ENCODE measurements at regions of chr15 and their contacts with region 1.

Region 1: DNA sequence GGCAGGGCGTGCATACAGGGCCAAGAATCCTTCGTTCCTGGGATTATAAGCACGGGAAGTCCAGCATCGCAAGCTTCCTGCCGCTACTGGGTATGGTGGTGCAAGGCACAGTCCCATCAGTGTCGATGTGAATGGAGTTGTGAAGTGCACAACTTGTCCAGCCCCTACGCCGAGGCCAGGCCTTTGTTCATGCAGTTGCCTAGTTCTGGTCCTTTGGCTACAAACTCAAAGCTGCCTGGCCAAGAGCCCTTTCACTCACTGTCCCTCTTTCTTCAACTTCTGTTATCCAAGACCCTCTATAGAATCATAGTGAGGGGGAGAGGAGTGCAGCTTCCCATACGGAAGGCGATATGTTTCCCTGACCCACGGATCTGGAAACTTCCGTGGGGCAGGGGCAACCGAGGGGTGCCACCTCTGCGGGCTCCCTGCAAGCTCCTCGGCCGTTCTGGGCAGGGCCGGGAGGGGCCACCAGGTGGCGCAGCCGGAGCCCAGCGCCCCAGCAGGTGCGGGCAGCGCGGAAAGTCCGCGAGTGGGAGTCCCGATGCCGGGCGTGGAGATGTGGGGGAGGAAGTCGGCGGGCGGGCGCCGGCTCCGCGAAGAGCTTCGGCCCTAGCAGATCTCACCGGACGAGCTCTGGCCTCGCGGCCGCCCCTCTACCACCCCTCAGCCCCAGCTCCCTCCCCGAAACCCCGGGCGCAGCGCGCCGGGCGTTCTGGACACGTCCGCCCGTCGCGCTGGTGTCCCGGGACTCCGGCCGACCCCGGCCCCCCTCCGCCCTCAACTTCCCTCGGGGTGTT is 693 bp downstream of the RASGRP1 start:
- DNase-seq: peak; percentile 89
- H3K4me3 Mint-ChIP-seq: peak overlapping the region; percentile 92
- H3K27ac Mint-ChIP-seq: peak overlapping the region; percentile 92
- H3K4me1 Mint-ChIP-seq: peaks cover 52% of the 10 kb centered on the region
- H3K27me3 Mint-ChIP-seq: no peaks in the 10 kb centered on the region

Region 2: GRCh38 chr15:38424101-38424552 is 139.8 kb before region 1 on chr15:
- CTCF ChIA-PET with region 1: no interaction called
- POLR2A ChIA-PET with region 1: no interaction called
- DNase-seq: no peak
- H3K4me3 Mint-ChIP-seq: no peak overlapping the region
- H3K27ac Mint-ChIP-seq: no peak overlapping the region
- H3K4me1 Mint-ChIP-seq: peaks cover 12% of the 10 kb centered on the region
- H3K27me3 Mint-ChIP-seq: peaks cover 38% of the 10 kb centered on the region

Region 3: GRCh38 chr15:38453971-38454695 is 109.8 kb before region 1 on chr15 and contains the start of gene FAM98B:
- CTCF ChIA-PET with region 1: interaction called, 10 read pairs
- POLR2A ChIA-PET with region 1: interaction called, 16 read pairs
- DNase-seq: peak; percentile 89
- H3K4me3 Mint-ChIP-seq: peak within 1 kb of the TSS; percentile 93
- H3K27ac Mint-ChIP-seq: peak within 1 kb of the TSS; percentile 84
- H3K4me1 Mint-ChIP-seq: peaks cover 35% of the 10 kb centered on the region
- H3K27me3 Mint-ChIP-seq: peaks cover 14% of the 10 kb centered on the region
- total RNA-seq, gene FAM98B: 33.2 to 35.3 TPM

Region 4: GRCh38 chr15:38470816-38471215 is 93.1 kb before region 1 on chr15:
- CTCF ChIA-PET with region 1: no interaction called
- POLR2A ChIA-PET with region 1: no interaction called
- DNase-seq: no peak
- H3K4me3 Mint-ChIP-seq: no peak overlapping the region
- H3K27ac Mint-ChIP-seq: no peak overlapping the region
- H3K4me1 Mint-ChIP-seq: peaks cover 4% of the 10 kb centered on the region
- H3K27me3 Mint-ChIP-seq: no peaks in the 10 kb centered on the region

Region 5: DNA sequence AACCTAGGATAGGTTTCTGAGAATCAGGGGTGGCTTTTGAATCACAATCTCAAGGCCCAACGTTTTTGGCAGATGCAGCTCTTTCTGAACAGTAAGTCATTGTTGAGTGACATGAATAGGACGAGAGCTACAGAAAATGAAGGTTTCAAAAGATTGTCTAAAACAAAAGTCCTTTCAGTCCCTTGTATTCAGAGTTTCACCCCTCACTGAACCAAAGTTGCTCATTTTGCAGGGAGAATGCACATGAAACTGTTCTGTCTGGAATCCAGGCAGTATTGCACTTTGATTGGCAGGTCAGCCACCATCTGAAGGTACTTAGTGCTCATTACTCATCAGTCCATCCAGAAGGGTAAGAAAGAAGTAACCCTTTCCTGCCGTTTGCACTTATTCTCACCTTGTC is 24.8 kb after region 1 on chr15:
- CTCF ChIA-PET with region 1: interaction called, 3 read pairs
- POLR2A ChIA-PET with region 1: interaction called, 13 read pairs
- DNase-seq: no peak
- H3K4me3 Mint-ChIP-seq: no peak overlapping the region
- H3K27ac Mint-ChIP-seq: no peak overlapping the region
- H3K4me1 Mint-ChIP-seq: peaks cover 32% of the 10 kb centered on the region
- H3K27me3 Mint-ChIP-seq: peaks cover 2% of the 10 kb centered on the region

Region 6: GRCh38 chr15:38624244-38625205 is 60.6 kb after region 1 on chr15:
- CTCF ChIA-PET with region 1: interaction called, 24 read pairs
- POLR2A ChIA-PET with region 1: interaction called, 22 read pairs
- DNase-seq: no peak
- H3K4me3 Mint-ChIP-seq: no peak overlapping the region
- H3K27ac Mint-ChIP-seq: no peak overlapping the region
- H3K4me1 Mint-ChIP-seq: peaks cover 25% of the 10 kb centered on the region
- H3K27me3 Mint-ChIP-seq: no peaks in the 10 kb centered on the region

Region 7: GRCh38 chr15:38647683-38648082 is 83.8 kb after region 1 on chr15:
- CTCF ChIA-PET with region 1: interaction called, 224 read pairs
- POLR2A ChIA-PET with region 1: interaction called, 495 read pairs
- DNase-seq: no peak
- H3K4me3 Mint-ChIP-seq: no peak overlapping the region
- H3K27ac Mint-ChIP-seq: no peak overlapping the region
- H3K4me1 Mint-ChIP-seq: peaks cover 63% of the 10 kb centered on the region
- H3K27me3 Mint-ChIP-seq: no peaks in the 10 kb centered on the region

Region 8: GRCh38 chr15:38671675-38672254 is 107.8 kb after region 1 on chr15:
- CTCF ChIA-PET with region 1: interaction called, 112 read pairs
- POLR2A ChIA-PET with region 1: interaction called, 327 read pairs
- DNase-seq: peak; percentile 52
- H3K4me3 Mint-ChIP-seq: peak overlapping the region; percentile 56
- H3K27ac Mint-ChIP-seq: peak overlapping the region; percentile 97
- H3K4me1 Mint-ChIP-seq: peaks cover 81% of the 10 kb centered on the region
- H3K27me3 Mint-ChIP-seq: no peaks in the 10 kb centered on the region

Region 9: DNA sequence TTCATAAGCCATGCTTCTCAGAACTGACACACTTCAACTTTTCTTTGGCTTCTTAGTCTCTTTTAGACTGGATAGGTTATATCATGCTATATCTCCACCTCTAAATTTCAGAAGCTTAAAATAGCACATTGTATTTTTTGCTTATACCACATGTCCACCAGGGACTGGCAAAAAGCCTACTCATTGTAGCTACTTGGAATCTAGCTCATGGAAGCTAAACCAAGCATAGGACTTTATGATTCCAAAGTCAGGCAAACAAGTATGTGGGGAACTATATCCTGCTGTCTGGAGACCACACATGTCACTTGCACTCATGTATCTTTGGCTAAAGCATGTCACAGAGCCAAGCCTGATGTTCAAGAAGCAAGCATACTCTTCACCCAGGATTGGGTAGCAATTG is 245.7 kb after region 1 on chr15:
- CTCF ChIA-PET with region 1: no interaction called
- POLR2A ChIA-PET with region 1: no interaction called
- DNase-seq: no peak
- H3K4me3 Mint-ChIP-seq: no peak overlapping the region
- H3K27ac Mint-ChIP-seq: no peak overlapping the region
- H3K4me1 Mint-ChIP-seq: no peaks in the 10 kb centered on the region
- H3K27me3 Mint-ChIP-seq: no peaks in the 10 kb centered on the region

Region 10: DNA sequence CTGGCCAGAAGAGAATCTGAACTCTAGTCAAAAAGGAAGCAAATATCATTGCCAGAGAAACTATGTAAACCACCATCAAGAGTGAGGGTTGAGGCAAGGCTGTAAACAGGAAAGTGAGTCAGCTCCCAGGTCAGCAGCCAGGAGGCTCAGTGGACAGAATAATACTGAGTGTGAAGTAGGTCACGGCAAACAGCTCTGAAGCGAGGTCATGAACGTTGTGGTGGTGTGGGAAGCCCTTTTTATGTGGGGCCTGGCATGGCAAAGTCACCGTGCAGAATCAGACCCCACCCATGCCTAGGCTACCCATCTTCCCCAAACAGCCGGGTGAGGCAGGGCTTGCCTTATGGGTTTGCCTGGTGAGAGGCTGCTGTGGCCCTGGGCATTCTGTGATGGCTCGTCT is 1060.9 kb after region 1 on chr15:
- CTCF ChIA-PET with region 1: no interaction called
- POLR2A ChIA-PET with region 1: interaction called, 16 read pairs
- DNase-seq: peak; percentile 88
- H3K4me3 Mint-ChIP-seq: peak overlapping the region; percentile 71
- H3K27ac Mint-ChIP-seq: peak overlapping the region; percentile 99
- H3K4me1 Mint-ChIP-seq: peaks cover 81% of the 10 kb centered on the region
- H3K27me3 Mint-ChIP-seq: no peaks in the 10 kb centered on the region

Measured in activated CD4-positive, alpha-beta memory T cell treated with anti-CD3 and anti-CD28 coated beads, Interleukin-2, amount 10 ng/mL, durations not matched to agents 7 days and 5 days (primary cell).